GM12878 (cell line): ENCODE measurements at regions of chr11 and their contacts with region 1.

Region 1: GRCh38 chr11:130131961-130132850 is 27.4 kb upstream of the ST14 start:
- DNase-seq: peak; percentile 15
- ATAC-seq: peak; percentile 94
- H3K4me3 ChIP-seq: no peak overlapping the region
- H3K27ac ChIP-seq: no peak overlapping the region
- H3K4me1 ChIP-seq: no peaks in the 10 kb centered on the region
- H3K27me3 ChIP-seq: no peaks in the 10 kb centered on the region
- CTCF ChIP-seq: peak; percentile 72 to 90 (median 89)
- EP300 ChIP-seq: no peak
- POLR2A ChIP-seq: no peak
- RAD21 ChIP-seq: peak; percentile 98

Region 2: GRCh38 chr11:129895126-129896041 is 236.8 kb before region 1 on chr11 and contains the start of gene NFRKB:
- CTCF ChIA-PET with region 1: interaction called, 11 read pairs
- POLR2A ChIA-PET with region 1: no interaction called
- RAD21 ChIA-PET with region 1: interaction called, 4 read pairs
- SMC1A ChIA-PET with region 1: interaction called, 6 read pairs
- in situ Hi-C with region 1: no loop called
- intact Hi-C with region 1: no loop called
- DNase-seq: peak; percentile 9
- ATAC-seq: peak; percentile 98
- H3K4me3 ChIP-seq: peak within 1 kb of the TSS; percentile 89
- H3K27ac ChIP-seq: peak within 1 kb of the TSS; percentile 65; the same call in 1 of the 2 replicates
- H3K4me1 ChIP-seq: peaks cover 6% of the 10 kb centered on the region
- H3K27me3 ChIP-seq: no peaks in the 10 kb centered on the region
- CTCF ChIP-seq: no peak
- EP300 ChIP-seq: no peak
- POLR2A ChIP-seq: peak; percentile 85
- RAD21 ChIP-seq: no peak
- polyA plus RNA-seq, gene NFRKB: 3.7 to 5.4 TPM

Region 3: DNA sequence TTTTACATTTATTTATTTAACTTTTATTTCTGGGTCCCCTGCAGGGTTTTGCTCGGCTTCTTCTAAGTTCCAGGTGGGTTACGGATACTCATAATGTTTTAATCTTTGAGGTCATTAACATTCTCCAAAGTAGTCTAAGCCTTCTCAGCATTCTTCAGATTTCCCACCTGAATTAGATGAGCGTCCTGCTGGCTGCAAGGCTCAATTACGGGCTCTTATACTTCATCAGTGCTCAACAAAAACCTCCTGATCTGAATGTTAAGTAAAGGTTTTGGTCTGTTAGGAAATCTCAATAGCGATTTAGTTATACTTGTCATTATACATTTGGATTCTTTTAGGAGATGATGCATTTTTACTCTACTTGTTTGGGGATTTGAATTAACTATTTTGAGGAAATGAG is 209.5 kb before region 1 on chr11:
- CTCF ChIA-PET with region 1: interaction called, 400 read pairs
- POLR2A ChIA-PET with region 1: interaction called, 3 read pairs
- RAD21 ChIA-PET with region 1: interaction called, 209 read pairs
- SMC1A ChIA-PET with region 1: interaction called, 130 read pairs
- in situ Hi-C with region 1: loop called (anchors 5 kb)
- intact Hi-C with region 1: loop called (anchors 1 kb)
- DNase-seq: no peak
- ATAC-seq: no peak
- H3K4me3 ChIP-seq: no peak overlapping the region
- H3K27ac ChIP-seq: no peak overlapping the region
- H3K4me1 ChIP-seq: no peaks in the 10 kb centered on the region
- H3K27me3 ChIP-seq: no peaks in the 10 kb centered on the region
- CTCF ChIP-seq: no peak
- EP300 ChIP-seq: no peak
- POLR2A ChIP-seq: no peak
- RAD21 ChIP-seq: no peak

Region 4: DNA sequence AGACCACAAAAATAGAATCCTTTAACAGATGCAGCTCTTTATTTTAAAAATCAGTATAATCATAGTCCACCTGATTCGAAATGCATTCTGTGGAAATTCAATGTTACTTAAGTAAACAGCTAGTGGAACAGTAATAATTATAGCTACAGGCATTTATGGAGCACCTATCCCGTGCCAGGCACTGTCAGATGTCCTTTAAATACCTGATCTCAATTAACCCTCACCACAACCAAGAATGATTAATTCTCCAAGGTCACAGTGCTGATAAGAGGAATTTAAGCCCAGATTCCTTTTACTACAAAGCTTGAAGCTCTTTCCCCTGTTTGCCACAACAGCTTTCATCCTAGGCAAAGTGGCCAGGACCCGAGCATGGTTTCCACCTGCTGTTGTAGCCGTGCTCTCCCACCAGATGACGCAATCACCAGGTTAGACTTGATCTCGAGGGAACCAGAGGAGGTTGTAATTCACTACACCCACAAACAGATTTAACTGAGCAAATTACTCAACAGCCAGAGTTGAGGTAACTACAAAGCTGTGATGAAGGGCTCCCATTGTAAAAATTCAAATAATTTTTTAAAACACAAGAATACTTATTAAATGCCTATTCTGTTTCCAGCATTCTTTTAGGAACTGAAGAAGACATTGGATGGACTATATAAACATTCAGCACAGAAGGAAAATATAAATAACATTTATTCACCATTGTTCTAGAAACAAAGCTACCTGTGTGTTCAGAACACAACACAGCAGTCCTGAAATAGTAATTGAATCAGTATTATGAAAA is 139.9 kb before region 1 on chr11:
- CTCF ChIA-PET with region 1: interaction called, 57 read pairs
- POLR2A ChIA-PET with region 1: no interaction called
- RAD21 ChIA-PET with region 1: interaction called, 21 read pairs
- SMC1A ChIA-PET with region 1: interaction called, 28 read pairs
- in situ Hi-C with region 1: no loop called
- intact Hi-C with region 1: no loop called
- DNase-seq: no peak
- ATAC-seq: peak; percentile 71
- H3K4me3 ChIP-seq: no peak overlapping the region
- H3K27ac ChIP-seq: no peak overlapping the region
- H3K4me1 ChIP-seq: no peaks in the 10 kb centered on the region
- H3K27me3 ChIP-seq: no peaks in the 10 kb centered on the region
- CTCF ChIP-seq: peak; percentile 41 to 44 (median 42); a peak in 5 of 6 replicates
- EP300 ChIP-seq: no peak
- POLR2A ChIP-seq: no peak
- RAD21 ChIP-seq: peak; percentile 48

Region 5: DNA sequence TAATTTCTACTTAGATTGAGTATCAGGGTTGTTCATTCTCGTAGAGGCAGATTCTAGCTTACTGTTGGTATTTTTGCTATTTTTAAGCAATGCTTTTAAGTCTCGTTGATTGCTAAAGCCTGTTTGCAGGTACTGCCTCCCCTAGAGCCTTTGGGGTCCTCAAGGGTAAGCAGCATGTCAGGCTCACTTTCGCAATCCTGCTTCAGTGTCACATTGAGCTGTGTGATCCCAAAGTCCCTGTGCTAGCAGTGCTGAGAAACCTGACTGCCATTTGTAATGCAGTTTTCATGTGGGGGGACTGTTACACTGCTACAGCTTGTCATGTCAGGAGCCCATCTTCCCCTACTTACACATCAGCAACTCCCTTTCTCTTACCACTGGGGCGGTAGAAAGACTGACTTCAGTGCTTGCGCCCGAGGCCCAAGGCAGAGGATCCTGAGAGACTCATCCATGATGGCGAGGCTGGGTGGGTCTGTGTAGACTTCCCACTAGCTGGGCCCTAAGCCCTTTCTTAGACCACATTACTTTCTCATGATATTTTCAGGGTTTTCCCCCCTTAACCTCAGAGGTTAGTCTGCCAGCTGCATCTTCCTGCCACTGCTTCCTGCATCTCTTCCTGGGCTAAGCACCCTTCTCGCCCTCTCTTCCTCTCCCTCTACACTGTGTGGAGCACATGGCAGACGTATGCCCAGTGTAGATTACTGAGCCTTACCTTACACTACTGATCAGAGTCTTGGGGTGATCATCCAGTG is 13.4 kb before region 1 on chr11:
- CTCF ChIA-PET with region 1: interaction called, 46 read pairs
- POLR2A ChIA-PET with region 1: interaction called, 5 read pairs
- RAD21 ChIA-PET with region 1: interaction called, 20 read pairs
- SMC1A ChIA-PET with region 1: interaction called, 48 read pairs
- in situ Hi-C with region 1: no loop called
- intact Hi-C with region 1: no loop called
- DNase-seq: peak; percentile 38
- ATAC-seq: peak; percentile 79
- H3K4me3 ChIP-seq: peak overlapping the region; percentile 29; the same call in 1 of the 2 replicates
- H3K27ac ChIP-seq: peak overlapping the region; percentile 40; the same call in 1 of the 2 replicates
- H3K4me1 ChIP-seq: peaks cover 20% of the 10 kb centered on the region
- H3K27me3 ChIP-seq: no peaks in the 10 kb centered on the region
- CTCF ChIP-seq: no peak
- EP300 ChIP-seq: no peak
- POLR2A ChIP-seq: no peak
- RAD21 ChIP-seq: no peak